Psoas muscle (tissue), 8 donors: ENCODE measurements at regions of chr14 and their contacts with region 1.

Region 1: GRCh38 chr14:75002392-75003249 is at the start of gene EIF2B2:
- DNase-seq: peak; percentile 98 to 99
- ATAC-seq: peak; percentile 99
- H3K4me3 ChIP-seq: peak within 1 kb of the TSS; percentile 92
- H3K27ac ChIP-seq: peak within 1 kb of the TSS; percentile 92
- H3K4me1 ChIP-seq: peaks cover 16% of the 10 kb centered on the region
- H3K27me3 ChIP-seq: no peaks in the 10 kb centered on the region
- CTCF ChIP-seq: peak; percentile 20
- total RNA-seq, gene EIF2B2: 44.5 to 68.9 (median 54.6) TPM

Region 2: GRCh38 chr14:74816124-74816523 is 186.5 kb before region 1 on chr14:
- intact Hi-C with region 1: no loop called
- DNase-seq: no peak
- ATAC-seq: peak; percentile 75 to 89 (median 83)
- H3K4me3 ChIP-seq: no peak overlapping the region
- H3K27ac ChIP-seq: peak overlapping the region; percentile 38
- H3K4me1 ChIP-seq: no peaks in the 10 kb centered on the region
- H3K27me3 ChIP-seq: no peaks in the 10 kb centered on the region
- CTCF ChIP-seq: no peak

Region 3: GRCh38 chr14:74945823-74946682 is 56.6 kb before region 1 on chr14:
- intact Hi-C with region 1: loop called (anchors 5 kb)
- DNase-seq: peak; percentile 78 to 85
- ATAC-seq: peak; percentile 82 to 91 (median 86)
- H3K4me3 ChIP-seq: no peak overlapping the region
- H3K27ac ChIP-seq: no peak overlapping the region
- H3K4me1 ChIP-seq: peaks cover 15% of the 10 kb centered on the region
- H3K27me3 ChIP-seq: no peaks in the 10 kb centered on the region
- CTCF ChIP-seq: peak; percentile 89

Region 4: DNA sequence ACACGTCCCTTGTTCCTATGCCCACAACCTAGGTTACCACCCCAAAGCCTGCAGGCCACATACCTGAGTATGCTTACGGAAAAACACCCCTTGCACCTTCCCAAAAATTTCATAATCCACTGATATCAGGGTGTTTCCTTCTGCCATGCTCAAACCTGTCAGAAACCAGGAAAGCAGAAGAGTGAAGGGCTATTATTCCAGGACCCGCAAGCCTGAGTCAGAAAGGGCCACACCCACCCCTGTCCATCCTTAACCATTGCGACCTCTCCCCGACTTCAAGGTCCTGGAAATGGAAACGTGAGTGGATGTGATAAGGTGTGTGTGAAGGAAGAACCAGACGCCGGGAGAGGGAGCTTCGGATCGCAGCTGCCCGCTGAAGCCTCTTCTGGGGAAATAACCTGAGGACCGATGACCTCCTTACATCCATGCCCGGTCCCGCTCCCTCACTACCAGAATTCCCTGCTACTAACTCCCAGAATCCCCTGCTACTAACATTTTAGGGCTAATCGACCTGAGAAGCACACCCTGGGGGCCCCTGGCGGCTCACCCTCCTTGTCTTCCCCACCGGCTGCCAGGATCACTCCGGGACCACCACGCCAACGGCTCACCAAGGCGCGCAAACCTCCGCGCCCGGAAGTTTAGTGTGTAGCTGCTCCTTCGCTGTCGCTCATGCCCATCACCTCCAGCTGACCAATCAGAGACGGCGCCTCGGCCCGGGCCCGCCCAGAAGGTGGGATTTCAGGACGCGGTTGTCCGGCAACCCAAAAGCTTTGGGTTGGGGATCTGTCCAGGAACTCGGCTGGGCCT is 61.0 kb after region 1 on chr14 and contains the start of gene ACYP1:
- intact Hi-C with region 1: loop called (anchors 2 to 10 kb)
- DNase-seq: peak; percentile 93 to 96
- ATAC-seq: peak; percentile 94 to 96 (median 94)
- H3K4me3 ChIP-seq: peak within 1 kb of the TSS; percentile 84
- H3K27ac ChIP-seq: peak within 1 kb of the TSS; percentile 85
- H3K4me1 ChIP-seq: peaks cover 36% of the 10 kb centered on the region
- H3K27me3 ChIP-seq: no peaks in the 10 kb centered on the region
- CTCF ChIP-seq: no peak
- total RNA-seq, gene ACYP1: 7.1 to 22.0 (median 10.6) TPM

Region 5: DNA sequence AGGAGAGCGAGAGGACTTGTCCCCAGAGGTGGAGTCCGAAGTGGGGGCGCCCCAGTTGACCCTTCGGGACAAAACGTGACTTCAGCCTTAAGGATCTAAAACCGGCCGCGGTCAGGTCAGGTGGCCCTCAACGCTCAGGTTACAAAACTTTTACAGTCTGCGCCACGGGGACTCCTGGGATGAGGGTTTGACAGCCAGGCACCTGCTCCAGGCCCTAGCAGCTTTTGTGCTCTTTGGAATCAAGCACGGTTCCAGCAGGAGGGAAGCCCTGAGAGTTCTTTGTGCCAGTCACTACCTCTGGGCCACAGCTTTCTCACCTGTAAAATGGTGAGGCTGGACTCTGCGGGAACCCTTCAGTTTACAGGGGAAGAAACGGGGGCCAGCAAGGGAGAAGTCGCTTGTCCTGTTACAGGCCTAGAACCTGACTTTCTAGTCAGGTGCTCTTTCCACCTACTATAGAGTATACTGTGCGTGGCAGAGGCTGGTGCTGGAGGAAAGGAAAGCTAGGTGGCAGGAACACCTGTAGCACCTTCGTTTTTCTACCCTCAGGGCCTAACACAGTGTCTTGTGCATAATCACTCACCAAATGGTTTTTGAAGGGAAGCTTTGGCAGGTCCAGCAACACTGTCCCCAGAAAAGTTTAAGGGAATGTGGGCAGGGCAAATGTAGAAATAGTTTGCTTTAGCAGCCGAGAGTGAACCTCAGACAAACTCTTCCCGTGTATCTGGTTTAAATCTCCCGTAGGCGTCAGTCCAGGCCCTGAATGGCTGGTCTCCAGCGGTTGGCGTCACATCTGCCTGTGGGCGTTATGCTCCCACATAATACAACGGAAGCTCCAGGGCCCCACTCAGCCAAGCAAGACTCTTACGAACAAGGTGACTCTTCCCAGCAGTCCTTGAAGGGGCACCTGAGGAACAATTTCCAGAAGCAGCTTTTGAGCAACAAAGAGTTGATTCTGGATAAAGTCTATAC is 67.5 kb after region 1 on chr14:
- intact Hi-C with region 1: loop called (anchors 2 to 10 kb)
- DNase-seq: peak; percentile 71 to 78
- ATAC-seq: peak; percentile 68 to 79 (median 74)
- H3K4me3 ChIP-seq: peak overlapping the region; percentile 74
- H3K27ac ChIP-seq: peak overlapping the region; percentile 93
- H3K4me1 ChIP-seq: peaks cover 37% of the 10 kb centered on the region
- H3K27me3 ChIP-seq: no peaks in the 10 kb centered on the region
- CTCF ChIP-seq: no peak